ENCODE measurements at regions of chr12 and their contacts with region 1.

Region 1: GRCh38 chr12:40312982-40313576 is 88.3 kb downstream of the LRRK2 start:
- DNase-seq: peak; percentile 18
- H3K4me3 ChIP-seq: no peak overlapping the region
- H3K27ac ChIP-seq: no peak overlapping the region
- H3K4me1 ChIP-seq: peaks cover 3% of the 10 kb centered on the region
- H3K27me3 ChIP-seq: no peaks in the 10 kb centered on the region
- CTCF ChIP-seq: peak; percentile 72

Region 2: DNA sequence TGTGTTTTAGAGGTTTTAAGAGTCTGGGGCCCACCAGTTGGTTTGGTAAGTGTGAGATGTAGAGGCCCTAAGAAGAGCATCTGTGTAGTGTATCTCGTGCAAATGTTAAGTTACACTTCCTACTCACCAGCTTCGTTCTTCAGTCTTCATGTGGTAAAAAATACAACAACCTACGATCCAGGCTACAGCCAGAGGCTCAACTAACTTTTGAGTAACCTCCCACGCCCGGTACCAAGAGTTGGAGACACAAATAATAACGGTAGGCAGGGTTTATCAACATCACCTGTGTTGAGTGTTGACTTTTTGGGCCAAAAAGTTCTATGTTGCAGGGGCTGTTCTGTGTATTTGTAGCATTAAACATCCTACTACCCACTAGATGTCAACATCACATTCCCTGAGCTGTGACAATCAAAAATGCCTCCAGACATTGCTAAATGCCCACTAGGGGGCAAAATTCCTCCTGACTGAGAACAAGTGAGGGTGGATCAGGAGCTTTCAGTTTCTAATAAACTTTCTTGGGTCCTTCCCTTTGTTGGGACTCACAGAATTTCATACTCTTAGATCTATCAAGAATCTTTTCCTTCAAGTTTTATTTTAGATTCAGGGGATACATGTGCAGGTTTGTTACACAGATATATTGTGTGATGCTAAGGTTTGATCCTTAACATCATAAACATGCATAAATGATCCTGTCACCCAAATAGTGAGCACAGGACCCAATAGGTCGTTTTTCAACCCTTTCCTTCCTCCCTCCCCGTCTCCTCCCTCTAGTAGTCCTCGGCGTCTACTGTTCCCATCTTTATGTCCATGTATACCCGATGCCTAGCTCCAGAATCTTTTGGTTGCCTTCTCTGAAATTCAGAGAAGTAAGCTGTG is 301.9 kb before region 1 on chr12:
- CTCF ChIA-PET with region 1: no interaction called
- POLR2A ChIA-PET with region 1: no interaction called
- intact Hi-C with region 1: loop called (anchors 2 kb)
- DNase-seq: peak; percentile 84
- H3K4me3 ChIP-seq: peak overlapping the region; percentile 7
- H3K27ac ChIP-seq: no peak overlapping the region
- H3K4me1 ChIP-seq: peaks cover 7% of the 10 kb centered on the region
- H3K27me3 ChIP-seq: no peaks in the 10 kb centered on the region
- CTCF ChIP-seq: peak; percentile 89